ENCODE measurements at regions of chr19 and their contacts with region 1.

Region 1: DNA sequence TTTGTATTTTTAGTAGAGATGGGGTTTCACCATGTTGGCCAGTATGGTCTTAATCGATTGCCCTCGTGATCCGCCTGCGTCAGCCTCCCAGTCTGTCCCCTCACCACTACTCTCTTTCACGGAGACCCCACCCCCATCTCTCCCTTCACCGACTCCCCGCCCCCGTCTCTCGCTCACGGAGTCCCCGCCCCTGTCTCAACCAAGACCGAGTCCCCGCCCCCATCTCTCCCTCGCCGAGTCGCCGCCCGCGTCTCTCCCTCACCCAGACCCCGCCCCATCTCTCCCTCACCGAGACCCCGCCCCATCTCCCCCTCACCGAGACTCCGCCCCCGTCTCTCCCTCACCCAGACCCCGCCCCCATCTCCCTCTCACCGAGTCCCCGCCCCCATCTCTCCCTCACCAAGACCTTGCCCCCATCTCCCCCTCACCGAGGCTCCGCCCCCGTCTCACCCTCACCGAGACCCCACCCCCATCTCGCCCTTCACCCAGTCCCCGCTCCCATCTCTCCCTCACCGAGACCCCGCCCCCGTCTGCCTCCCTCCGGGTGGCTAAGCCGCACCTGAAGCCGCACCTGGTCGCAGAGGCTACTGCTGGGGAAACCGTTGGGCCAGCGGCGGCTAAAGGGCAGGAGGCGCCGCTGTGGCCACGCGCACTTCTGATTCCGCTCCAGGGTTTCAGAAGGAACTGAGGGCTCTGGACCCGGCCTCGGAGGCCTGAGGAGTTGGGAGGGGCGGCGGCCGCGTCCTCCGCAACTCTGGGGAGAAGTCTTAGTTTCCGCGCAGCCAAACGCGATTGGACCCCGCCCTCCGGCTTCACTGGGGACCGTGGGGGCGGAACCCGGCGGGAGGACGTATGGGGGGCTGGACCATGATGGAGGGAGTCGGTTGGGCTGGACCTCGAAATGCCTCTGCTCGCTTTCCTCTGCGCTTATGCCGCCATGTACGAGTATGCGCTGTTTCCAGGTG is 17.1 kb upstream of the ZNF846 start:
- DNase-seq: peak; percentile 99
- H3K4me3 Mint-ChIP-seq: peak overlapping the region; percentile 84
- H3K27ac Mint-ChIP-seq: peak overlapping the region; percentile 85
- H3K4me1 Mint-ChIP-seq: peaks cover 16% of the 10 kb centered on the region
- H3K27me3 Mint-ChIP-seq: no peaks in the 10 kb centered on the region

Region 2: DNA sequence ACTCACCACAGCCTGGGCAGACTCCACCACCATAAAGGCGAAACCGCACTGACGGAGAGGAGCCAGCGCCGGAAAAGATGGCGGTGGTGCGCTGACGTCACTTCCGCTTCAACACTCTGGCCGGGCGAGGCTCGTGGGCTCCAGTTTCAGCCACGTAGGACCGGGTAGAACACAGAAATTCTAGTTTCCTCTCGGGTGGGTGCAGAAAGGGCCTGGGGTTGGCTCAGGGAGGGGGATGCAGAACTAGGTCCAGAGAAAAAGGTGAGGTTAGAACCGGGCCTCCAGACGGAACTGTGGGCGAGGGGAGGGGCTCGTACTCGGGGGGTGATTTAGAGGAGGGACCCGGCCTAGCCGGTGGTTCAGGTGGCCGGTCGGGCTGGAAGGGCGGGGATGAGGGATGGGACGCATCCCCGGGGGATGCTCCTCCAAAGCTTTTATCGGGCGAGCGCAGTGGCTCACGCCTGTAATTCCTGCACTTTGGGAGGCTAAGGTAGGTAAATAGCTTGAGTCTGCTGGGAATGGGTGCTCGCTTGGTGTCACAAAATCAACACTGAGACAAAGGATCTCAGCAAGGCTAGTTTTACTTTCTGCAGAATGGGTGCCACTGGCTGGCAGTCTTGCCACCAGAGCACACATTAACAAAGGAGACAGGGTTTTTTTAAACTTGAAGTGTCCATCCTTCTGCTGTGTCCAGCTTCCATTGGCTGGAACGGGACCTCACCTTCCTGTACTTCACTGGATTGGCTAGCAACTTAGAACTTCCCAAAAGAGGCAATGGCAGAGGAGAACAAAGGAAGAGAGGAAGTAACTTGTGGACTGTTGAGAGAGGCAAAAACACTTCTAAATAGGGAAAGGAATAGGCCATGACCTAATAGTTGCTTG is 164.3 kb before region 1 on chr19 and contains the start of gene ZNF561:
- CTCF ChIA-PET with region 1: interaction called, 6 read pairs
- POLR2A ChIA-PET with region 1: no interaction called
- intact Hi-C with region 1: loop called (anchors 1 kb)
- DNase-seq: peak; percentile 91
- H3K4me3 Mint-ChIP-seq: peak within 1 kb of the TSS; percentile 92
- H3K27ac Mint-ChIP-seq: peak within 1 kb of the TSS; percentile 99
- H3K4me1 Mint-ChIP-seq: peaks cover 22% of the 10 kb centered on the region
- H3K27me3 Mint-ChIP-seq: no peaks in the 10 kb centered on the region
- total RNA-seq, gene ZNF561: 24.7 to 25.5 TPM

Region 3: GRCh38 chr19:9818734-9819589 is 33.3 kb after region 1 on chr19 and contains the start of gene FBXL12:
- CTCF ChIA-PET with region 1: interaction called, 3 read pairs
- POLR2A ChIA-PET with region 1: no interaction called
- intact Hi-C with region 1: loop called (anchors 1 kb)
- DNase-seq: peak; percentile 100
- H3K4me3 Mint-ChIP-seq: peak within 1 kb of the TSS; percentile 88
- H3K27ac Mint-ChIP-seq: peak within 1 kb of the TSS; percentile 91
- H3K4me1 Mint-ChIP-seq: peaks cover 28% of the 10 kb centered on the region
- H3K27me3 Mint-ChIP-seq: no peaks in the 10 kb centered on the region
- total RNA-seq, gene FBXL12: 20.7 to 22.0 TPM

Region 4: DNA sequence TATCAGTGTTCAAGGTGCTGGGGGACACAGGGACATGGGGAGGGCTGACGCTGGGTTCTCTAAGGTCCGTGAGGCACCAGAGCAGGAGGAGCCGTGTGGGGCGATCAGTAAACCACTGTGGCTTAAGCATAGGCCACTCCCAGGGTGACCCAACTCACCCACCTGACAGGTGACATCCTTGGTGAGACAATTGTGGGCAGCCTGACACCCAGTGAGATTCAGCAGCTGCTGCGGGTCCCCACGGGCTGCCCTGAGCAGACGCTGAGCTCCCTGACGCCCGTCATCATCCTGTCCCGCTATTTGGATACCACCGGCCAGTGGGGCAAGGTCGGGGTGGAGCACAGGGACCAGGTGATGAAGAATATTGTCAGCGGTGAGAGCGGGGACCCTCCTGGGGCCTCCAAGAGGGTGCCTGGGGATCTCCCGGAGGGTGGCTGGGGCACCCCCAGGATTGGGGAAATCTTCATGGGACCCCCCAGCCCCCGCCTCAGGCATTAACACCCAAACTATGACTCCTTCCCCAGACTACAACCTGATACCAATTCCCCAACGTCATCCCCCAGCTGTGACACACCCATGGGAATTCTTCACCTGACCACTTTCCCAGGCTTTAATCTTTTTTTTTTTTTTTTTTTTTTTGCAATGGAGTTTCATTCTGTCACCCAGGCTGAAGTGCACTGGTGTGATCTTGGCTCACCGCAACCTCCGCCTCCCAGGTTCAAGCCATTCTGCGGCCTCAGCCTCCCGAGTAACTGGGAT is 267.1 kb after region 1 on chr19:
- CTCF ChIA-PET with region 1: no interaction called
- POLR2A ChIA-PET with region 1: no interaction called
- intact Hi-C with region 1: no loop called
- DNase-seq: no peak
- H3K4me3 Mint-ChIP-seq: no peak overlapping the region
- H3K27ac Mint-ChIP-seq: no peak overlapping the region
- H3K4me1 Mint-ChIP-seq: no peaks in the 10 kb centered on the region
- H3K27me3 Mint-ChIP-seq: peaks cover 2% of the 10 kb centered on the region